Heart left ventricle (tissue), 16 donors: ENCODE measurements at regions of chr21 and their contacts with region 1.

Region 1: DNA sequence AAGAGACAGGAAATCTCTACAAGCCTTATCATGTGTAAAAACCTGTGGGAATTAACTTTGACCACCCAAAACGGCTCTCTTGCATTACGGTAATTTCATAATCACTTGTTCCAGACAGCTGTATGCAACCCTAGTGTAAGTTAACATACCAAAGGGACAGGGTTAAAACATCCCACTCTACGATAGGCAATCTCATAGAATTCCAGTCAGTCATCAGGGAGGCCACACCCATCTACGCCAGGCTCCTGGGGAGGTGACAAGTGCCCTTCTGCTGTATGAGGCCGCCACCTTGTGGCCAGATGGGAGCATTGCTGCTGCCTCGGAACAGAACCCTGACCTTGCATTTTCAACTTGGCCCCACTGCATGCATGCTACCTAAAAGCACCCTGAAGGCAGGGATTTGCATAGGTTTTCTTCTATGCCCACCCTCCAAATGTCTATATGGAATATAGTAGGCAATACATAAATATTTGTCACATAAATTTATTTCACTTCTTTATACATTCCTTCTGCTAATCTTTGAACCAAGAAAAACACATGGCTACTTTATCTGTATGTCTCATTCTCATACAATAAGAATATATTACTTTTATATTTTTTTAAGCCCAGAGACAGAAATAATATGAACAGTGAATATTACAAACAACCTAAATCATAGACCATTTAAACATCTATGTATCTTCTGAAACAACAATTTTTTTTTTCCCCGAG is 12.6 kb downstream of the HSF2BP start:
- DNase-seq: peak; percentile 89 to 94 (median 92)
- ATAC-seq: peak; percentile 91 to 97 (median 96)
- H3K4me3 ChIP-seq: peak overlapping the region in 1 of 12 donors; percentile 19
- H3K27ac ChIP-seq: peak overlapping the region in 9 of 12 donors; percentile 11 to 77 (median 52)
- H3K4me1 ChIP-seq: peaks cover 0 to 23% (median 10%) of the 10 kb centered on the region in 12 donors
- H3K27me3 ChIP-seq: no peaks in the 10 kb centered on the region
- CTCF ChIP-seq: peak; percentile 99 to 100 (median 99)
- POLR2A ChIP-seq: no peak

Region 2: GRCh38 chr21:42913476-42913875 is 733.2 kb before region 1 on chr21:
- intact Hi-C with region 1: loop called in 1 of 10 experiments (anchors 10 kb)
- DNase-seq: no peak
- ATAC-seq: peak in 2 of 4 donors; percentile 19 to 27
- H3K4me3 ChIP-seq: no peak overlapping the region
- H3K27ac ChIP-seq: no peak overlapping the region
- H3K4me1 ChIP-seq: peaks cover 0 to 4% (median 0%) of the 10 kb centered on the region in 12 donors
- H3K27me3 ChIP-seq: no peaks in the 10 kb centered on the region
- CTCF ChIP-seq: no peak
- POLR2A ChIP-seq: no peak

Region 3: GRCh38 chr21:43312751-43313169 is 333.9 kb before region 1 on chr21:
- intact Hi-C with region 1: loop called in 1 of 10 experiments (anchors 5 kb)
- DNase-seq: peak in 1 of 5 donors; percentile 42
- ATAC-seq: no peak
- H3K4me3 ChIP-seq: no peak overlapping the region
- H3K27ac ChIP-seq: no peak overlapping the region
- H3K4me1 ChIP-seq: no peaks in the 10 kb centered on the region
- H3K27me3 ChIP-seq: peaks cover 0 to 2% (median 0%) of the 10 kb centered on the region in 9 donors
- CTCF ChIP-seq: no peak
- POLR2A ChIP-seq: no peak

Region 4: GRCh38 chr21:43333298-43334062 is 313.2 kb before region 1 on chr21:
- intact Hi-C with region 1: loop called in 2 of 10 experiments (anchors 10 kb)
- DNase-seq: peak; percentile 47 to 74 (median 57)
- ATAC-seq: peak; percentile 27 to 69 (median 56)
- H3K4me3 ChIP-seq: peak overlapping the region in 7 of 12 donors; percentile 1 to 24 (median 14)
- H3K27ac ChIP-seq: peak overlapping the region in 9 of 12 donors; percentile 16 to 77 (median 60)
- H3K4me1 ChIP-seq: peaks cover 0 to 27% (median 15%) of the 10 kb centered on the region in 12 donors
- H3K27me3 ChIP-seq: no peaks in the 10 kb centered on the region
- CTCF ChIP-seq: no peak
- POLR2A ChIP-seq: no peak

Region 5: GRCh38 chr21:43611598-43612369 is 34.9 kb before region 1 on chr21:
- intact Hi-C with region 1: loop called in 1 of 10 experiments (anchors 5 kb)
- DNase-seq: peak; percentile 52 to 70 (median 66)
- ATAC-seq: peak; percentile 40 to 88 (median 84)
- H3K4me3 ChIP-seq: no peak overlapping the region
- H3K27ac ChIP-seq: no peak overlapping the region
- H3K4me1 ChIP-seq: peaks cover 0 to 17% (median 6%) of the 10 kb centered on the region in 12 donors
- H3K27me3 ChIP-seq: no peaks in the 10 kb centered on the region
- CTCF ChIP-seq: peak; percentile 57 to 81 (median 70)
- POLR2A ChIP-seq: no peak